ENCODE measurements at regions of chr18 and their contacts with region 1.

Region 1: DNA sequence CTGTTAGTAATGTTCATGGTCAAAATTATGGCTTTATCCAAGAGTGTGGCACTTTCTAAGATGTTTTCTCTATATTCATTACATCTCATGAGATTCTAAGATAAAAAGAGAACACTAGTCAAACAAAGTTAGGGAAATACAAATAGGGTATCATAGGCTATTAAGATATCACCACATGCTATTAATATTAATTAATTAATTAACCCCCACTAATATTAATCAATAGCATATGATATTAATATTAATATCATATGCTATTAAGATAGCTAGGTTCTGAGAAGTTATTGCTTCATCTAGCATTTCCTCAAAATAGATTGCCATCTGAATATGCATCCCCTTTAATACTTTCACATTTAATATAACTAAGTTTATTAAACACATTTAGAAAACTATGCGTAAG is 22.1 kb downstream of the DSG3 start:
- DNase-seq: no peak
- H3K4me3 ChIP-seq: no peak overlapping the region
- H3K27ac ChIP-seq: no peak overlapping the region
- H3K4me1 ChIP-seq: no peaks in the 10 kb centered on the region
- H3K27me3 ChIP-seq: no peaks in the 10 kb centered on the region
- CTCF ChIP-seq: no peak

Region 2: GRCh38 chr18:31386741-31387140 is 82.9 kb before region 1 on chr18:
- CTCF ChIA-PET with region 1: no interaction called
- dilution Hi-C with region 1: no loop called
- in situ Hi-C with region 1: no loop called
- intact Hi-C with region 1: no loop called
- DNase-seq: no peak
- H3K4me3 ChIP-seq: no peak overlapping the region
- H3K27ac ChIP-seq: no peak overlapping the region
- H3K4me1 ChIP-seq: no peaks in the 10 kb centered on the region
- H3K27me3 ChIP-seq: no peaks in the 10 kb centered on the region
- CTCF ChIP-seq: no peak

Region 3: DNA sequence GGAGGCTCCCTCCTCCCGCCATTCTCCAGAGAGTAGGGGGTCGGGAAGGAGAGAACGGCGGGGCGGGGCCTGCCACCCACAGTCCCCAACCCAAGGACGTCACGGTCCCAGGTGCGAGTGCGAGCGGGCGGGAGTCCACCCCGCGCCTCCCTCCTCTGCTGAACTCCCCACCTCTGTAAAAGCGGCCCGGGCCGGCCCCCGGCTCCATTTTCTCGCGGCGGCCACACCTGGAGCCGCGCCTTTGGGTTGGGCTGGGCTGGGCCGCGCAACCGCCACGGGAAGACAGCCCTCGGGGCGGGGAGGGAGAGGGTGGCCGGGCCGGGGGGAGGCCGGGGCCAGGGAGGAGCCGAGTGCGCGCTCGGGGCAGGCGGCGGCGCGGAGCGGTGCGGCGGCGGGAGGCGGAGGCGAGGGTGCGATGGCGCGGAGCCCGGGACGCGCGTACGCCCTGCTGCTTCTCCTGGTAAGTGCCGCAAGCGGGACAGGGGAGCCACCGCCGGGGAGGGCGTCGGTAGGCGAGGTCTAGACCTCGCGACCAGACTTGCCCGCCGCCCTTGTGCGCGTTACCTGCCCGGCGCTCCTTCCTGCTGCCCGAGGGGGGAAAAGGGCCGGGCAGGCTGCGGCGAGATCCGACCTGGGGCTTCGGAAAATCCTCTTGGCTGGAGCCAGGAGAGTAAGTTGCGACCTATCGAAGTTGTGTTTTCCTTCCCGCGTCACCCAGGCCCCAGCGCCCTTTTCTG is 28.4 kb after region 1 on chr18 and contains the start of gene DSG2:
- CTCF ChIA-PET with region 1: no interaction called
- dilution Hi-C with region 1: loop called (anchors 5 kb)
- in situ Hi-C with region 1: no loop called
- intact Hi-C with region 1: no loop called
- DNase-seq: peak; percentile 87
- H3K4me3 ChIP-seq: peak within 1 kb of the TSS; percentile 72 to 77 (median 73)
- H3K27ac ChIP-seq: peak within 1 kb of the TSS; percentile 93
- H3K4me1 ChIP-seq: peaks cover 19% of the 10 kb centered on the region
- H3K27me3 ChIP-seq: no peaks in the 10 kb centered on the region
- CTCF ChIP-seq: no peak
- total RNA-seq, gene DSG2: 110 to 150 TPM

Region 4: DNA sequence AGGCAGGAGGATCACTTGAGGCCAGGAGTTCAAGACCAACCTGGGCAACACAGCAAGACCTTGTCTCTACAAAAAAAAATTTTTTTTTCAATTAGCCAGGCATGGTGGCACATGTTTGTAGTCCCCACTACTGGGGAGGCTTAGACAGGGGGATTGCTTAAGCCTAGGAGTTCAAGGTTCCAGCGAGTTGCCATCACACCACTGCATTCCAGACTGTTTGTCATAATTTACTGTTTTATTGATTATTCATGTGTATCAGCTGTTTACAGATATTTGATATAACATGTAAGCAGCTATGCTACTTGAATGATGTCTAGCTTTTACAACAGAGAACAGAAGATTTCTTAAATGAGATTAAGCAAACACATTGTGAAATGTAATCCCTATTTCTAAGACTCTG is 63.6 kb after region 1 on chr18:
- CTCF ChIA-PET with region 1: no interaction called
- dilution Hi-C with region 1: no loop called
- in situ Hi-C with region 1: no loop called
- intact Hi-C with region 1: no loop called
- DNase-seq: no peak
- H3K4me3 ChIP-seq: no peak overlapping the region
- H3K27ac ChIP-seq: no peak overlapping the region
- H3K4me1 ChIP-seq: no peaks in the 10 kb centered on the region
- H3K27me3 ChIP-seq: no peaks in the 10 kb centered on the region
- CTCF ChIP-seq: no peak

Measured in mammary epithelial cell (primary cell).